Posterior vena cava (tissue), 2 donors: ENCODE measurements at regions of chr15 and their contacts with region 1.

Region 1: DNA sequence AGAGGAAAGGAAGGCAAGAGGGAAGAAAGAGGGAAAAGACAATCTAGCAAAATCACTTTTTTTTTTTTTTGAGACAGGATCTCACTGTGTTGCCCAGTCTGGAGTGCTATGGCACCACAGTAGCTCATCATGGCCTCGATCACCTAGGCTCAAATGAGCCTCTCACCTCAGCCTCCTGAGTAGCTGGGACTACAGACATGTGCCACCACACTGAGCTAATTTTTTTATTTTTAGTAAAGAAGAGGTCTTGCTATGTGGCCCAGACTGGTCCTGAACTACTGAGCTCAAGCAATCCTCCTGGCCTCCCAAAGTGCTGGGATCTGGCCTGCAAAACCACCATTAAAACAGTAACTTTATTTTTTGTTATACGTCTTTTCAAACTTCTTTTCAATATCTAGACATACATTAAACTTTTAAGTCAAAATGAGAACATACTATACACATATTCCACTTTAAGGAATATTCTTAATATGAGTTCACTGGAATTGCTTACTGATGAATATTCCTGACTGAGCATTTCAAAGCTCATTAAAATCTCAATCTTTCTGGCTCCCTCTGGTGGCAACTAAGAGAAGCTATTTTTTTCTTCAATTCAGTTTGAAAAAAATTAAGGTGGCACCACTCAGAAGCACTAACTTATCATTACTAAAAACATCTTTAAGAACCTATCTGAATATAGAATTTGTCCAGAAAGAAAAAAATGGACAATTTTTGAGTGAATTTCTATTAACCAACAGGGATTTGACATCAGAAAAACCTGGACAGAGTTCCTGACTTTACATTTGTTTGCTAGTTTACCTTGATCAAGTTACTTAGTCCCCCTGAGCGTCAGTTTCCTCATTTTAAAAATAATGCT is 40.9 kb downstream of the UACA start:
- DNase-seq: no peak

Region 2: DNA sequence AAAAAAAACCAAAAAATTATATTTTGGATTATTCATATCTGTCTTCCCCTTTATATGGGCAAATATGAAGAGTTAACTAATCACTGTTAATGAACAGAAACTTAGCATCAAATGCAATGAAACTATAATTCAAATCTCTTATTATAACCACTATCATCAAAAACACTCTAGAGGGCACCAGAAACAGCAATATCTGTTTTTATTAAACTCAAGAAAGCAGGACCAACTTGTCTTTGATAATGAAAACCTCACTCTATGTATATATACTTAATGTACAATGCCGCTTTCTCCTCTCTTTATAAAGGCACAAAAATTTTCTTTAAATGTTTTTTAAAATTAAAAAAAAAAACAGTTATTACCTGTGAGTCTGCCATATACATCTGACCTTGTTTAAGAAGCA is 51.8 kb before region 1 on chr15:
- intact Hi-C with region 1: loop called in 1 of 2 experiments (anchors 10 kb)
- DNase-seq: no peak